ENCODE measurements at regions of chr1 and their contacts with region 1.

Region 1: DNA sequence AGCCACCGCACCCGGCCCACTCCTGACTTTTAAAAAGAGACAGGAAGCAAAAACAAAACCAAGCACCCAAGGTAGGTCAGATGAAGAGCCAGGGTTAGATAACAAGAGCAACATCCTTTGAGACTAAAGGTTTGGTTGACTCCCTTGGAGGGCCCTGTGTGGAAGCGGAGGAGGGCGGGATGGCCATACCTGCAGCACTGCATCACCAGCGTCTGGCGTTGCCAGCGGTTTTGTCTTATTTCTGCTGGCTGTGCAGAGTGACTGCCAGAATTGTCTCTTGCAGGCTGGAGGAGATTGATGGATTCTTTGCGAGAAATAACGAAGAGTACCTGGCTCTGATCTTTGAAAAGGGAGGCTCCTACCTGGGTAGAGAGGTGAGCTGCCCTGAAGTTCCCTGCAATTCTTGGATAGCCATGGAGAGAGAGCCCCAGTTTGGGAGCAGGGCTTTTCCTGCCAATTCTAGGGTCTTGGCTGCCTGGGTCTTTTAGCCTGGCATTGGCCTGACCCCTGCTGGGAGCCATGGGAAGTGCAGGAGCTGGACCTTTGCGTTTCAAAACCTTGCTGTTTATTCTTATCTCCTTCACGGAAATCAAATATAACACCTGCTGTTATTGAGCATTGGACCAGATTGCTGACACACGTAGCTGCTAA is 24.0 kb downstream of the QSOX1 start:
- DNase-seq: peak; percentile 80
- ATAC-seq: peak; percentile 61
- H3K4me3 Mint-ChIP-seq: no peak overlapping the region
- H3K27ac Mint-ChIP-seq: no peak overlapping the region
- H3K4me1 Mint-ChIP-seq: no peaks in the 10 kb centered on the region
- H3K27me3 Mint-ChIP-seq: no peaks in the 10 kb centered on the region

Region 2: GRCh38 chr1:179867807-179868330 is 310.8 kb before region 1 on chr1:
- CTCF ChIA-PET with region 1: interaction called, 43 read pairs
- POLR2A ChIA-PET with region 1: interaction called, 3 read pairs
- intact Hi-C with region 1: loop called (anchors 1 kb)
- DNase-seq: peak; percentile 69
- ATAC-seq: peak; percentile 80
- H3K4me3 Mint-ChIP-seq: no peak overlapping the region
- H3K27ac Mint-ChIP-seq: no peak overlapping the region
- H3K4me1 Mint-ChIP-seq: peaks cover 17% of the 10 kb centered on the region
- H3K27me3 Mint-ChIP-seq: no peaks in the 10 kb centered on the region

Region 3: GRCh38 chr1:180026556-180026955 is 152.1 kb before region 1 on chr1:
- CTCF ChIA-PET with region 1: no interaction called
- POLR2A ChIA-PET with region 1: no interaction called
- intact Hi-C with region 1: no loop called
- DNase-seq: no peak
- ATAC-seq: no peak
- H3K4me3 Mint-ChIP-seq: no peak overlapping the region
- H3K27ac Mint-ChIP-seq: no peak overlapping the region
- H3K4me1 Mint-ChIP-seq: peaks cover 5% of the 10 kb centered on the region
- H3K27me3 Mint-ChIP-seq: no peaks in the 10 kb centered on the region

Region 4: GRCh38 chr1:180080433-180080832 is 98.2 kb before region 1 on chr1:
- CTCF ChIA-PET with region 1: interaction called, 15 read pairs
- POLR2A ChIA-PET with region 1: no interaction called
- intact Hi-C with region 1: loop called in 1 of 2 experiments (anchors 5 kb)
- DNase-seq: no peak
- ATAC-seq: peak; percentile 84
- H3K4me3 Mint-ChIP-seq: no peak overlapping the region
- H3K27ac Mint-ChIP-seq: no peak overlapping the region
- H3K4me1 Mint-ChIP-seq: peaks cover 3% of the 10 kb centered on the region
- H3K27me3 Mint-ChIP-seq: no peaks in the 10 kb centered on the region

Region 5: DNA sequence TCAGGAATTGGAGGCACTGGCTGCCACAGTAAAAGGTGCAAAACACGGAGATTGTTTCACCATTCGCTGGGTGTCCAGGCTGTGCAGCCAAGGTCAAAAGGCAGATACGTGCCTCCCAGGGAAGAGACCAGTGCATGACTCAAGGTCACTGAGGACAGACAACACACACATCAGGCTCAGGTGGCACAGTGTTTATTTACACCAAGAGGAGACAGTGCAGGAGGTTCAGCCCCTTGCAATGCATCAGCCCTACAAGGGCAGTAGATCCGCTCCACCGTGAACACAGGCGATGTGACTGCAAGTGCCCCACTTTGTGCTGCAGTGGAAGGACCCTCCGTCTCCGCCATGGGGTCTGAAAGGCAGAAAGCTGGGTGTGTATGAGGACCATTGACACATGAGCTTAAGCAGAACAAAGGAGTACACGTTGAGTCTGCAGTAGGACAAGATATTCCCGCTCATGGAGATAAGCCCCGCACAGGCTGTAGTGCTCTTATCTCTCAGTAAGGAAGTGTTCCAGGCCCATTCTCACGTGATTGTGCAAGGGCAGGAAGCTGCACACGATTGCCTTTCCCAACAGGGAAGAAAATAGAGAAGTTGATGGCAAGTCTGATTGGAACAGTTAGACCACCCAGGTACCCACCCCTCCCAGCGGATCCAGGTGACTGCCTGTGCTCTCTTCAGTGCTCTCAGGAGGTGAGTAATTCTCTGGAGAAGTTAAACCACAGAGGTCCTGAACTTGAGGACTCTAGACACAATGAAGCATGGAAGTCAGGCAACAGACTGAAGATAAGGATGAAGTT is 61.5 kb before region 1 on chr1:
- CTCF ChIA-PET with region 1: interaction called, 4 read pairs
- POLR2A ChIA-PET with region 1: no interaction called
- intact Hi-C with region 1: loop called in 1 of 2 experiments (anchors 10 kb)
- DNase-seq: no peak
- ATAC-seq: no peak
- H3K4me3 Mint-ChIP-seq: no peak overlapping the region
- H3K27ac Mint-ChIP-seq: no peak overlapping the region
- H3K4me1 Mint-ChIP-seq: no peaks in the 10 kb centered on the region
- H3K27me3 Mint-ChIP-seq: no peaks in the 10 kb centered on the region

Region 6: GRCh38 chr1:180154325-180155181 is 24.1 kb before region 1 on chr1 and contains the start of gene QSOX1:
- CTCF ChIA-PET with region 1: interaction called, 13 read pairs
- POLR2A ChIA-PET with region 1: no interaction called
- intact Hi-C with region 1: no loop called
- DNase-seq: peak; percentile 95
- ATAC-seq: peak; percentile 97
- H3K4me3 Mint-ChIP-seq: peak within 1 kb of the TSS; percentile 90
- H3K27ac Mint-ChIP-seq: peak within 1 kb of the TSS; percentile 85
- H3K4me1 Mint-ChIP-seq: peaks cover 25% of the 10 kb centered on the region
- H3K27me3 Mint-ChIP-seq: no peaks in the 10 kb centered on the region
- total RNA-seq, gene QSOX1: 18.3 to 31.6 TPM